ENCODE measurements at regions of chr19 and their contacts with region 1.

Region 1: DNA sequence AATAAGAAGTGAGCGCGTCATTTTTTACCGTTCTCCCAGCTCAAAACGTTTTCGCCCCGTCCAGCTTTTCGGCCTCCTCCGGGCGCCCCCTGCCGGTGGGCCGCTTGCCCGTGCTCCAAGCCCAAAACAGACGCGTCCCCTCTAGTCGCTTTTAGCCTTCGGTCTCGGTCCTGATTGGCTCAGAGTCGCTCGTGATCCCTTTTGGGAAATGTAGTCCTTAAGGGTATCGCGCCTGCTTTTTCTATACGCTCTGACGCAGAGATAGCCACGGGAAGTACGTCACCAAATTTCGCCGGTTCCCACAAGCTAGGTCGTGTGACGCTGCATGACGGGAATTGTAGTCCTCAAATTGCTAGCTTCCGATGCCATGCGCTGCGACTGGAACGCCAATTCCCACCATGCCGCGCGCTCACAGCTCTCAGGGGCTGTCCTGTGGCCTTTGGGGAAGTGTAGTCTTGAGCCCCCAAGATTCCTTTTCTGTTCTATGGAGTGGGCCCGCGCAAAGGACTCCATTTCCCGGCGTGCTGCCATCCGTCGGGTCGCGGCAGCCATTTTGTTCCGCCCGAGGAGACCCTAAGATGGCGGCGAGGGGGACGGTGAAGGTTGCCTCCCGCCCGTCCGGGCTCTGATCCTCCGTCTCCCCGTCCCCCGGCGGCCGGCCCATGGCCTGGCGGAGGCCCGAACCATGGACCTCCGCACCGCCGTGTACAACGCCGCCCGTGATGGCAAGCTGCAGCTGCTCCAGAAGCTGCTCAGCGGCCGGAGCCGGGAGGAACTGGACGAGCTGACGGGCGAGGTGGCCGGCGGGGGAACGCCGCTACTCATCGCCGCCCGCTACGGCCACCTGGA is at the start of gene FEM1A:
- DNase-seq: peak; percentile 99
- H3K4me3 ChIP-seq: peak within 1 kb of the TSS; percentile 85 to 99 (median 94)
- H3K27ac ChIP-seq: peak within 1 kb of the TSS; percentile 88 to 98 (median 94)
- H3K4me1 ChIP-seq: peaks cover 18 to 54% (median 50%) of the 10 kb centered on the region in 6 donors
- H3K27me3 ChIP-seq: no peaks in the 10 kb centered on the region
- CTCF ChIP-seq: peak; percentile 99 to 100 (median 100)
- POLR2A ChIP-seq: peak in 2 of 3 donors; percentile 40 to 68
- total RNA-seq, gene FEM1A: 10.3 to 18.2 (median 13.8) TPM

Region 2: GRCh38 chr19:4723367-4724187 is 67.8 kb before region 1 on chr19 and contains the start of gene DPP9:
- intact Hi-C with region 1: loop called (anchors 5 kb)
- DNase-seq: peak; percentile 97
- H3K4me3 ChIP-seq: peak within 1 kb of the TSS; percentile 77 to 99 (median 94)
- H3K27ac ChIP-seq: peak within 1 kb of the TSS; percentile 85 to 97 (median 93)
- H3K4me1 ChIP-seq: peaks cover 12 to 58% (median 47%) of the 10 kb centered on the region in 6 donors
- H3K27me3 ChIP-seq: no peaks in the 10 kb centered on the region
- CTCF ChIP-seq: peak in 9 of 11 experiments; percentile 21 to 54 (median 39)
- POLR2A ChIP-seq: peak in 2 of 3 donors; percentile 26 to 86
- total RNA-seq, gene DPP9: 47.4 to 89.9 (median 69.7) TPM

Region 3: GRCh38 chr19:4732680-4733114 is 58.7 kb before region 1 on chr19:
- intact Hi-C with region 1: loop called (anchors 5 kb)
- DNase-seq: no peak
- H3K4me3 ChIP-seq: no peak overlapping the region
- H3K27ac ChIP-seq: no peak overlapping the region
- H3K4me1 ChIP-seq: peaks cover 0 to 11% (median 6%) of the 10 kb centered on the region in 6 donors
- H3K27me3 ChIP-seq: peaks cover 0 to 18% (median 0%) of the 10 kb centered on the region in 7 donors
- CTCF ChIP-seq: peak in 10 of 11 experiments; percentile 23 to 77 (median 68)
- POLR2A ChIP-seq: no peak

Region 4: DNA sequence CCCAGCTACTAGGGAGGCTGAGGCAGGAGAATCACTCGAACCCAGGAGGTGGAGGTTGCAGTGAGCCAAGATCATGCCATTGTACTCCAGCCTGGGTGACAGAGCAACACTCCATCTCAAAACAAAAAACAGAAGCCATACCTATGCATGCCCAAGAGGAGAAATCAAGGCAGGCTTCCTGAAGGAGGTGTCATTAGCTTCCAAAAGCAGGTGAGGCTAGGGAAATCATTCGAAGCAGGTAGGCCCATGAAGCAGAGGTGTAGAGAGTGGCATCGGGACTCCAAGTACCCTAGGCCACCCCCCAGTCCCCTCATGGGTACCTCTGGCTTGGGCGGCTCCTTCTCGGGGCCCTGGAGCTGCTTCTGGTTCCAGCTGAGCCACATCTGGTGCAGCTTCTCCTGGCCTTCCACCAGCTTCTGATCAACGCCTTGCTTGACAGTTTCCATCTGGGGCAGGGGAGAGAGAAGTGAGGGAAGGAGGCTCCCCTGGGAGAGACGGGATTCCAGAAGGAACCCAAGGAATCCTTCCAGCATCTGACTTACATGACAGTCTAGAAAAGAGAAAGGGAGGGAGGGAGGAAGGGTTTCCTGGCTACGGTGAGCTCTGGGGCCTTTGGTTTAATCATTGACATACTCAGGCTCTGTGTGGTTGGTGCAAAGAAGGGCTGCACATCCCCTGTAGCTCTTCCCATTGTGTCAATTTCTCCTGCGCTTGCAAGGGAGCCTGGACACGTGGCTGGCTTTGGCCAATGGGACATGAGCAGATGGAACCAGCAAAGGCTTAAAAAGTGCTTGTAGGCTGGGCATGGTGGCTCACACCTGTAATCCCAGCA is 53.2 kb after region 1 on chr19:
- intact Hi-C with region 1: no loop called
- DNase-seq: no peak
- H3K4me3 ChIP-seq: no peak overlapping the region
- H3K27ac ChIP-seq: no peak overlapping the region
- H3K4me1 ChIP-seq: peaks cover 0 to 14% (median 2%) of the 10 kb centered on the region in 6 donors
- H3K27me3 ChIP-seq: no peaks in the 10 kb centered on the region
- CTCF ChIP-seq: no peak
- POLR2A ChIP-seq: no peak

Region 5: DNA sequence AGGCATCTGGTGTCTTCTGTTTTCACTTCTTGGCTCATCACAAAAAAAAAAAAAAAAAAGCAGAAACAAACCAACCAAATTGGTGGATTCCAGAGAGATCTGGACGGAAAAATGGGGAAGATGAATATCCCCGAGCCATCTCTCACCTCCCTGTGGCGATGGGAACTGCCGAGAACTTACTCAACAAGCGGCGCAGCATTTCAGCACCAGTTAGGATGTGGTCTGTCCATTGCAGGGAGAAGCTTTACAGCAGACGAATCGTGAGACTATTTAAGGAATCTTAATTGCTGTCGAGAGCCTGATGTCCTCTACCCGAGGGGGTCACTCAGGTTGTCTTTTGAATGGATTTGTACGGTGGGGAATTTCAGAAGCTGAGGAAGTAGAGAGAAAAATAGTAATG is 160.3 kb after region 1 on chr19:
- intact Hi-C with region 1: no loop called
- DNase-seq: no peak
- H3K4me3 ChIP-seq: no peak overlapping the region
- H3K27ac ChIP-seq: no peak overlapping the region
- H3K4me1 ChIP-seq: peaks cover 0 to 8% (median 0%) of the 10 kb centered on the region in 6 donors
- H3K27me3 ChIP-seq: no peaks in the 10 kb centered on the region
- CTCF ChIP-seq: no peak
- POLR2A ChIP-seq: no peak

Measured in spleen (tissue), 13 donors.